T-cell (primary cell): ENCODE measurements at regions of chr16 and their contacts with region 1.

Region 1: GRCh38 chr16:54208237-54208636 is 78.3 kb downstream of the IRX3 start:
- DNase-seq: no peak
- ATAC-seq: no peak
- H3K4me3 ChIP-seq: no peak overlapping the region
- H3K4me3 Mint-ChIP-seq: no peak overlapping the region
- H3K27ac ChIP-seq: no peak overlapping the region
- H3K27ac Mint-ChIP-seq: no peak overlapping the region
- H3K4me1 ChIP-seq: no peaks in the 10 kb centered on the region
- H3K4me1 Mint-ChIP-seq: no peaks in the 10 kb centered on the region
- H3K27me3 ChIP-seq: peaks cover 0 to 18% of the 10 kb centered on the region in 2 experiments
- H3K27me3 Mint-ChIP-seq: peaks cover 9 to 10% of the 10 kb centered on the region in 2 donors

Region 2: DNA sequence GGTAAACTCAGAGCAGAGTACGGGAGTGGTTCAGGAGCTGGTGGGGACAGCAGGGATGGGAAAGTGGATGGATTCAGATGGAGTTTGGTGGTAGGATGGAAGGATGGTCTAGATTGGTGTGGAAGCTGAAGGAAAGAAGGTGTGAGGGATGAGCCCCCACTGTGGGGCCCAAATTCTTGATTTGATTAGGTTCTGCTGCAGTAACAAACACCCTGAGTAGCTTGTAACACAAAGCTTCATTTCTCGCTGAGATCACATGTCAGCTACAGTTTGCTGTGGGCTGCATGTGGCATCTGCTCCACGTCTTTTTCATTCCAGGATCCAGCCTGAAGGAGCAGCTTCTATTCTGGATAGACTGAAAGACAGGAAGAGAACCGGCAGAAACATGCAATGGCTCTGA is 65.5 kb before region 1 on chr16:
- CTCF ChIA-PET with region 1: interaction called in 1 of 2 experiments, 13 read pairs
- POLR2A ChIA-PET with region 1: no interaction called
- DNase-seq: no peak
- ATAC-seq: no peak
- H3K4me3 ChIP-seq: no peak overlapping the region
- H3K4me3 Mint-ChIP-seq: no peak overlapping the region
- H3K27ac ChIP-seq: no peak overlapping the region
- H3K27ac Mint-ChIP-seq: no peak overlapping the region
- H3K4me1 ChIP-seq: no peaks in the 10 kb centered on the region
- H3K4me1 Mint-ChIP-seq: no peaks in the 10 kb centered on the region
- H3K27me3 ChIP-seq: peaks cover 0 to 22% of the 10 kb centered on the region in 2 experiments
- H3K27me3 Mint-ChIP-seq: peaks cover 12 to 29% of the 10 kb centered on the region in 2 donors

Region 3: DNA sequence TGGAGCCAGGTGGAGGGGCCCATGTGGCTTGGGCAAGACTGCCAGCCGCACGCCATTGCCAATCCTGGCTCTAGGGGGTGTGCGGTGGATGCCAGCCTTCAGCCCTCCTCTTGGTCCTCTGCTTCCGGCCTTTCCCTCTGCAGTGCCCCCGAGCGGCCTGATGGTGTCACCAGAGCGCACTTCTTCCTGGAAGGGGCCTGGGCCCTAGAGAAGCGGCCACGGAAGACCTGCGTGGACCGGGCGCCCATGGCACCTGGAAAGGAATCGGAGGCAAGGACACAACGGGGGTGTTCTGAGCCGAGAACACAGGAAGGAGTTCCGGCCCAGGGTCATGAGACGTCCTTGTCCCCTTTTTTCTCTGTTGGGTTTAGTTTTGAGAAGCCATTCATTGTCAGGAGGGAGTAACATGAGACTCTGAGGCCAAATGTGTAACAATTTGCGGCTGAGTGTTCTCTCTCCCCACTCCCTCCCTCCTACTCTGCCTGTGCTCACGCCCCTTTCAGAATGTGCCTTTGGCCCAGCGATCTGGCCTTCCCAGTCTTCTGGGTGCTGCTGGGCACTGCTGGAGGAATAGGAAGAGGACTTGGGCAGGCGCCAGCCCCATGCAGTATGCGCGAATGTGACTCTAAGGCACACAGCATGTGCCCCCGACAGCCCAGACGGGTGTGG is 14.4 kb before region 1 on chr16:
- CTCF ChIA-PET with region 1: no interaction called
- POLR2A ChIA-PET with region 1: no interaction called
- DNase-seq: peak in 16 of 35 experiments; percentile 3 to 23 (median 6)
- ATAC-seq: peak in 1 of 4 experiments; percentile 33
- H3K4me3 ChIP-seq: no peak overlapping the region
- H3K4me3 Mint-ChIP-seq: no peak overlapping the region
- H3K27ac ChIP-seq: no peak overlapping the region
- H3K27ac Mint-ChIP-seq: no peak overlapping the region
- H3K4me1 ChIP-seq: no peaks in the 10 kb centered on the region
- H3K4me1 Mint-ChIP-seq: no peaks in the 10 kb centered on the region
- H3K27me3 ChIP-seq: peaks cover 0 to 13% of the 10 kb centered on the region in 2 experiments
- H3K27me3 Mint-ChIP-seq: peaks cover 0 to 10% of the 10 kb centered on the region in 2 donors

Region 4: GRCh38 chr16:54236773-54237172 is 28.5 kb after region 1 on chr16:
- CTCF ChIA-PET with region 1: no interaction called
- POLR2A ChIA-PET with region 1: no interaction called
- DNase-seq: no peak
- ATAC-seq: no peak
- H3K4me3 ChIP-seq: no peak overlapping the region
- H3K4me3 Mint-ChIP-seq: no peak overlapping the region
- H3K27ac ChIP-seq: no peak overlapping the region
- H3K27ac Mint-ChIP-seq: no peak overlapping the region
- H3K4me1 ChIP-seq: no peaks in the 10 kb centered on the region
- H3K4me1 Mint-ChIP-seq: no peaks in the 10 kb centered on the region
- H3K27me3 ChIP-seq: peaks cover 0 to 12% of the 10 kb centered on the region in 2 experiments
- H3K27me3 Mint-ChIP-seq: peaks cover 8 to 9% of the 10 kb centered on the region in 2 donors